PC-9 (cell line): ENCODE measurements at regions of chr16 and their contacts with region 1.

Region 1: DNA sequence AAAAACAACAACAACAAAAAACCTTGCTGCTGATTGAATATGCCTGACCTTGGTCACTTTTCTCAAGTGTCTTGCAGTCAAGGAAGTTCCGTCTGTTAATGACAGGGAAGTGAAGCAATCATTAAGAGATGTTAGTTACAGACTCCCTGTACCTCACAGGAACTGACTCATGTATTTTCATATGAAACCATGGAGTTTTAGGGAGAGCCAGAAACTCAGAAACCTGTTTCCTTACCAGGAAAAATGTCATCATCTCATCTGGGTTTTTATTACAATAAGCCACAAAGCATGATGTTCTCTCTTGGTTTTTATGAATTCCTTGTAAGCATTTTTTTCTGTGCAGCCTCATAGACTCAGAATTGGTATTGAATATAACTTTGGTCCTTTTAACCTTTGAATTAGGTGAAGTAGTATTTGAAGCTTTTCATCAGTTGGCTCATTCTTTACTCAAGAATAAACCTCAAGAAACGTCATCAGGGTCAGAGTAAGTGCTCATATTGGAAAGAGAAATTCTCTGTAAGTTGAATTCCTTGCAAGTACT is 10.3 kb downstream of the LYRM1 start:
- DNase-seq: peak; percentile 20 to 99
- H3K4me3 ChIP-seq: peak overlapping the region; percentile 18; the same call in 1 of the 2 replicates
- H3K27ac ChIP-seq: peak overlapping the region; percentile 99
- H3K4me1 ChIP-seq: peaks cover 88% of the 10 kb centered on the region
- H3K27me3 ChIP-seq: no peaks in the 10 kb centered on the region
- CTCF ChIP-seq: no peak

Region 2: DNA sequence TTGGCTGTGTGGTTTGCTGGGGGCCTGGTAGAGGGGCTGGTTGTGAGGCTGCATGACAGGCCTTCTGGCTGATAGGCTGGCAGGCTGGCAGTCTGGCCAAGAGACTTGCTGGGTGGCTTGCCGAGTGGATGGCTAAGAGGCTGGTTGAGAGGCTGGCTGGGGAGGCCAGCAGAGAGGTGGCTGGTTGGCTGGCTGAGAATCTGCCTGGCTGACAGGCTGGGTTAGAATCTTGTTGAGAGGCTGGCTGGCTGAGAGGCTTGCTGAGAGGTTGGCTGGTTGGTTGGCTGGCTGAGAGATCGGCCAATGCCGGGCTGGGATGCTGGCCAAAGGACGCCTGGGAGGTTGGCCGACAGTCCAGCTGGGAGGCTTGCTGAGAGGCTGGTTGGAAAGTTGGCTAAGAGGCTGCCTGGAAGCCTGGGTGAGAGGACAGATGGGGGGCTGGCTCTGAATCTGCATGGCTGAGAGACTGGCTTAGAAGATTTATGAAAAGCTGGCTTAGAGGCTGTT is 298.8 kb before region 1 on chr16:
- CTCF ChIA-PET with region 1: no interaction called
- POLR2A ChIA-PET with region 1: no interaction called
- intact Hi-C with region 1: no loop called
- DNase-seq: no peak
- H3K4me3 ChIP-seq: no peak overlapping the region
- H3K27ac ChIP-seq: no peak overlapping the region
- H3K4me1 ChIP-seq: no peaks in the 10 kb centered on the region
- H3K27me3 ChIP-seq: peaks cover 50% of the 10 kb centered on the region
- CTCF ChIP-seq: no peak

Region 3: GRCh38 chr16:20879175-20880040 is 31.4 kb before region 1 on chr16:
- CTCF ChIA-PET with region 1: interaction called, 4 read pairs
- POLR2A ChIA-PET with region 1: interaction called, 12 read pairs
- intact Hi-C with region 1: no loop called
- DNase-seq: peak in 1 of 2 experiments; percentile 67
- H3K4me3 ChIP-seq: no peak overlapping the region
- H3K27ac ChIP-seq: peak overlapping the region; percentile 58
- H3K4me1 ChIP-seq: peaks cover 30% of the 10 kb centered on the region
- H3K27me3 ChIP-seq: no peaks in the 10 kb centered on the region
- CTCF ChIP-seq: no peak

Region 4: GRCh38 chr16:20938426-20938825 is 27.6 kb after region 1 on chr16:
- CTCF ChIA-PET with region 1: interaction called, 12 read pairs
- POLR2A ChIA-PET with region 1: interaction called, 14 read pairs
- intact Hi-C with region 1: no loop called
- DNase-seq: peak; percentile 38 to 87
- H3K4me3 ChIP-seq: peak overlapping the region; percentile 22; the same call in 1 of the 2 replicates
- H3K27ac ChIP-seq: peak overlapping the region; percentile 95
- H3K4me1 ChIP-seq: peaks cover 31% of the 10 kb centered on the region
- H3K27me3 ChIP-seq: no peaks in the 10 kb centered on the region
- CTCF ChIP-seq: no peak